ENCODE measurements at regions of chr10 and their contacts with region 1.

Region 1: GRCh38 chr10:15209827-15210509 is 41.5 kb upstream of the NMT2 start:
- DNase-seq: peak; percentile 73
- ATAC-seq: peak; percentile 85

Region 2: DNA sequence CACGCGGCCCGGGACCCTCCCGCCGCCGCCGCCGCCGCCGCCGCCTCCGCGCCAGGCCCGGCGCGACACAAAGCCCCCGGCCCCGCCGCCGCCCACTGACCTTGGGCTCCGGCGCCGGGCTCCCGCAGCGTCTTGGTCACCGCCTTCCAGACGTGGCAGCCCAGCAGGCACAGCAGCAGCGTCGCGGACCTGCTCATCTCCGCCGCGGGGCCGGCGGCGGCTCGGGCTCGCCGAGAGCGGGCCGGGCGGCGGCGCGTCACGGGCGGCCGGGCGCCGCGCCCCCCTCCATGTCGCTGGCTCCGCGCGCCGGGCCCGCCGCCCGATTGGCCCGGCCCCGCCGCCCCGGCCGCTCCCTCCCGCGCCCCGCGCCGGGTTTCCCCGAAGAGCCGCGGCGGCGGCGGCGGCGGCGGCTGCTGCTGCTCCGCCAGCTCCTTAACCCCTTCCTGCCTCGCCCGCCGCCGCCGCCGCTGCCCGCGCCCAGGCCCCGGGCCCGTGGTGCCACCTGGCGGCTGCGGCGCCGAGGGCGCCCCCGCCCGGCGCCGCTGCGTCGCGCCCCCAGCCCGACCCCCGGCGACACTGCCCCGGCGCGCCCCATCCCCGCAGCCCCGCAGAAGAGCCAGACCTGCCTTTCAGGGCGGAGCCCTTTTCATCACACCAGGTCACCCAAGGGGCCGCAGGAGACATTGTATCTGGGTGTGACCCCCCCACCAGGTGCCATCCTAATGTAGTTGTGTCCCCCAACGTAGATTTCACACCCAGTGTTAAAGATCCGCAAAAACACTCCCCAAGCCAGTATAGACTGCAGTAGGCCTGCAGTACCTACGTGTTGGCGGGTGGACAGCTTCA is 161.1 kb after region 1 on chr10 and contains the start of gene FAM171A1:
- intact Hi-C with region 1: loop called (anchors 1 kb)
- DNase-seq: peak; percentile 77
- ATAC-seq: peak; percentile 85
- total RNA-seq, gene FAM171A1: 12.2 TPM

Region 3: GRCh38 chr10:15419279-15419874 is 209.4 kb after region 1 on chr10:
- intact Hi-C with region 1: loop called (anchors 5 kb)
- DNase-seq: no peak
- ATAC-seq: no peak